GM12878 (cell line): ENCODE measurements at regions of chr5 and their contacts with region 1.

Region 1: DNA sequence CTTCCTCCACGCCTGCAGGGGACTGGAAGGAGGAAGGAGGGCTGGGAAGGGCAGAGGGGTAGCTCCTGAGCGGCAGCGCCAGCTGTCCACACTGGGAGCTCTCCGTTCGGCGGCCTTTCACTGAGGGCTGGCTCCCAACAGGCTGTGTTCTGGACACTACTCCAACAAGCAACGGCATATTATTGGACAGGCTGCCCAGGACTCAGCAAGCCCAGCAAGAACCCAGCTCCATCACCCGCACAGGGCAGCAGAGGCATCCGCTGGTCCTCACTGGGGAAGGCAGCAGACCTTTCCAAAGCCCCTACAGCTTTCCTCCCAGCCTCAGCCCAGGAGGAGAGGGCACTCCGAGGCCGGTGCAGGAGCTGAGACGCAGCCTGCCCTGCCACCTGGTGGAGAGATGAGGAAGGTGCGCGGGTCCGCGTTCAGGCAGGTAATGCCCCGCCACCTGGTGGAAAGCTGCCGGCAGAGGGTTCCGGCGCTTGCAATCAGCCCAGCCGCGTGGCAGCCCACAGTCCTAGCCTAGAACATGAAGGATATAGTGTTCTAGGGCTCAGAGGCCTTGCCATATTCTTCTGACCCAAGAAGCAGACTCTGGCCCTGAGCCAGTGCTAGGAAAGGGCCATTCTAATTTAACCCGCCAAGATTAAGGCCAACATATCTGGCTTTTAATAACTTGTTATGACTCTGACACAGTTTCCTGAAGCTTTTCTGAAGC is 74.4 kb downstream of the NRG2 start:
- DNase-seq: peak; percentile 43
- ATAC-seq: peak; percentile 97
- H3K4me3 ChIP-seq: no peak overlapping the region
- H3K27ac ChIP-seq: no peak overlapping the region
- H3K4me1 ChIP-seq: peaks cover 10% of the 10 kb centered on the region
- H3K27me3 ChIP-seq: no peaks in the 10 kb centered on the region
- CTCF ChIP-seq: peak; percentile 100; a peak in 5 of 6 replicates
- EP300 ChIP-seq: no peak
- POLR2A ChIP-seq: no peak
- RAD21 ChIP-seq: peak; percentile 97

Region 2: GRCh38 chr5:139293504-139294373 is 675.0 kb before region 1 on chr5 and contains the start of gene MATR3:
- CTCF ChIA-PET with region 1: no interaction called
- POLR2A ChIA-PET with region 1: no interaction called
- RAD21 ChIA-PET with region 1: no interaction called
- SMC1A ChIA-PET with region 1: no interaction called
- in situ Hi-C with region 1: no loop called
- intact Hi-C with region 1: no loop called
- DNase-seq: peak; percentile 74
- ATAC-seq: peak; percentile 84
- H3K4me3 ChIP-seq: peak within 1 kb of the TSS; percentile 89
- H3K27ac ChIP-seq: peak within 1 kb of the TSS; percentile 98
- H3K4me1 ChIP-seq: peaks cover 11% of the 10 kb centered on the region
- H3K27me3 ChIP-seq: no peaks in the 10 kb centered on the region
- CTCF ChIP-seq: no peak
- EP300 ChIP-seq: peak in 1 of 2 experiments; percentile 48; a peak in 1 of 4 replicates
- POLR2A ChIP-seq: peak; percentile 98
- RAD21 ChIP-seq: no peak
- polyA plus RNA-seq, gene MATR3: 149 to 187 TPM

Region 3: DNA sequence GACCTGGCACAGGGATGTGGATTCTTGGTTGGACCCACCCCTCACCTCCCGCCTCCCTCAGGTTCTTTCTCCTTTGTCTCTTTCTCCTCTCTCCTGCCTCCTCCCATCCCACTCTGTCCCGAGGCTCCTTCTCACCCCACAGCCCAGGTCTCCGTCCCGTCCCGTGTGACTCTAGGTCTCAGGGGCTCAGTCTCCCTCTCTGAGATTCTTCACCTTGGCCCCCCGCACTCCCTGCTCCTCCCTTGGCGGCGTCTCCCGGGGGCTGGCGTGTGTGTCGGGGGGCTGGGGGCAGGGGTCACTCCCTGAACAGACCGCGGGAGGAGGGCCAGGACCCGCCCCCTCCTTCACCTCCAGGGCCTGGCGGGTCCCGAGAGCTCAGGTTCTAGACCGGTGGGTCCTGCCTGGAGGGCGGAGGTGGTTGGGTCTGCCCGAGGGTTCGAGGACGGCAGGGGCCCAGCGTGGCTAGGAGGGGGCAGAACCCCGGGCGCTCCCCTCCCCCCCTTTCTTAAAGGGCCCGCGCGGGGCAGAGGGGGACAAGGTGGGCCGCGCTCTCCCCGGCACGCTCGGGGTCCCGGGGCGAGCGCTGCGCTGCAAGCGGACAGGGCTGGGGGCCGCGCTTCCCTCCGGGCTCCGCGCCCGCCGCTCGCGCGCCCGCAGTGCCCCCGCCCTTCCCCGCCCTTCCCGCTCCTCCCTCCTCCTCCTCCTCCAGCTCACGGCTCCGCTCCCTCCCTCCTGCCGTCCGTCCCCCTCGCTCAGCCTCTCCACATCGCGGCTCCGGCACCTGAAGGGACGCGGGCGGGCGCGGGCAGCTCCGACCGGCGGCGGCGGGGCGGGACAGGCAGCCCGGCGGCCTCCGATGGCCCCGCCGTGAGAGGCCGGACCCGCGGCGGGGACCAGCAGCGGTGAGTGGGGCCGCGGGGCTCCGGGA is 173.4 kb before region 1 on chr5 and contains the start of gene PSD2:
- CTCF ChIA-PET with region 1: interaction called, 298 read pairs
- POLR2A ChIA-PET with region 1: no interaction called
- RAD21 ChIA-PET with region 1: interaction called, 131 read pairs
- SMC1A ChIA-PET with region 1: interaction called, 6 read pairs
- in situ Hi-C with region 1: no loop called
- intact Hi-C with region 1: no loop called
- DNase-seq: no peak
- ATAC-seq: no peak
- H3K4me3 ChIP-seq: no peak within 1 kb of the TSS
- H3K27ac ChIP-seq: no peak within 1 kb of the TSS
- H3K4me1 ChIP-seq: no peaks in the 10 kb centered on the region
- H3K27me3 ChIP-seq: peaks cover 18 to 19% of the 10 kb centered on the region in 2 experiments
- CTCF ChIP-seq: no peak
- EP300 ChIP-seq: no peak
- POLR2A ChIP-seq: no peak
- RAD21 ChIP-seq: no peak
- polyA plus RNA-seq, gene PSD2: 0.02 TPM in 1 of 2 experiments, not detected in the other

Region 4: GRCh38 chr5:139872052-139872766 is 96.5 kb before region 1 on chr5:
- CTCF ChIA-PET with region 1: interaction called, 129 read pairs
- POLR2A ChIA-PET with region 1: interaction called, 4 read pairs
- RAD21 ChIA-PET with region 1: interaction called, 17 read pairs
- SMC1A ChIA-PET with region 1: interaction called, 16 read pairs
- in situ Hi-C with region 1: no loop called
- intact Hi-C with region 1: no loop called
- DNase-seq: no peak
- ATAC-seq: peak; percentile 28; the same call in 1 of the 3 replicates
- H3K4me3 ChIP-seq: no peak overlapping the region
- H3K27ac ChIP-seq: no peak overlapping the region
- H3K4me1 ChIP-seq: no peaks in the 10 kb centered on the region
- H3K27me3 ChIP-seq: no peaks in the 10 kb centered on the region
- CTCF ChIP-seq: peak; percentile 20 to 27 (median 21); a peak in 3 of 6 replicates
- EP300 ChIP-seq: no peak
- POLR2A ChIP-seq: no peak
- RAD21 ChIP-seq: peak; percentile 30

Region 5: GRCh38 chr5:139930406-139930805 is 38.3 kb before region 1 on chr5:
- CTCF ChIA-PET with region 1: interaction called, 11 read pairs
- POLR2A ChIA-PET with region 1: no interaction called
- RAD21 ChIA-PET with region 1: interaction called, 3 read pairs
- SMC1A ChIA-PET with region 1: interaction called, 3 read pairs
- in situ Hi-C with region 1: no loop called
- intact Hi-C with region 1: no loop called
- DNase-seq: no peak
- ATAC-seq: no peak
- H3K4me3 ChIP-seq: no peak overlapping the region
- H3K27ac ChIP-seq: no peak overlapping the region
- H3K4me1 ChIP-seq: 0 out of 2 replicates have a peak, but pooled peaks cover 6% of the 10 kb centered on the region
- H3K27me3 ChIP-seq: no peaks in the 10 kb centered on the region
- CTCF ChIP-seq: no peak
- EP300 ChIP-seq: no peak
- POLR2A ChIP-seq: no peak
- RAD21 ChIP-seq: no peak

Region 6: DNA sequence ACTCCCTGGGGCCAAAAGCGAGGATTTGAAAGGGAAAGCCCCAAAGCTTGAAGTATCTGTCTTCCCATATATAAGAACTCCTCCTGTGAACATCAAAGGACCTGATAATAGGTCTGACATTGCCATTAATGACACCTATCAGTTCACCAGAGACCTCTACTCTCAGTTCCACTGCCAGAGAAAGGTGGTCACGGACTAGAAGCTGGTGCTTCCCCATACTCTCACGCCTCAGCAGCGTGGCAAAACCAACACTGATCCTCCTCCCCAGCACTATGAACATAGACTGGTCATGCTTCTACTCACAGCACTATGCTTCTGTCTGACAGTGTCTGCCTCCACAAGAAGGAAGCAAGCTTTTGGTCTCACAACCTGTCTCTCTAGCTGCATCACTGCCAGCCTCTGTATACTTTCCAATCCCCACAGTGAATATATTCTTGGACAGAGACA is 36.5 kb after region 1 on chr5:
- CTCF ChIA-PET with region 1: interaction called, 88 read pairs
- POLR2A ChIA-PET with region 1: interaction called, 3 read pairs
- RAD21 ChIA-PET with region 1: interaction called, 19 read pairs
- SMC1A ChIA-PET with region 1: interaction called, 30 read pairs
- in situ Hi-C with region 1: no loop called
- intact Hi-C with region 1: no loop called
- DNase-seq: peak; percentile 96
- ATAC-seq: peak; percentile 98
- H3K4me3 ChIP-seq: no peak overlapping the region
- H3K27ac ChIP-seq: peak overlapping the region; percentile 49
- H3K4me1 ChIP-seq: peaks cover 26% of the 10 kb centered on the region
- H3K27me3 ChIP-seq: no peaks in the 10 kb centered on the region
- CTCF ChIP-seq: no peak
- EP300 ChIP-seq: peak; percentile 35 to 64; a peak in 2 of 4 replicates
- POLR2A ChIP-seq: peak; percentile 66
- RAD21 ChIP-seq: no peak

Region 7: DNA sequence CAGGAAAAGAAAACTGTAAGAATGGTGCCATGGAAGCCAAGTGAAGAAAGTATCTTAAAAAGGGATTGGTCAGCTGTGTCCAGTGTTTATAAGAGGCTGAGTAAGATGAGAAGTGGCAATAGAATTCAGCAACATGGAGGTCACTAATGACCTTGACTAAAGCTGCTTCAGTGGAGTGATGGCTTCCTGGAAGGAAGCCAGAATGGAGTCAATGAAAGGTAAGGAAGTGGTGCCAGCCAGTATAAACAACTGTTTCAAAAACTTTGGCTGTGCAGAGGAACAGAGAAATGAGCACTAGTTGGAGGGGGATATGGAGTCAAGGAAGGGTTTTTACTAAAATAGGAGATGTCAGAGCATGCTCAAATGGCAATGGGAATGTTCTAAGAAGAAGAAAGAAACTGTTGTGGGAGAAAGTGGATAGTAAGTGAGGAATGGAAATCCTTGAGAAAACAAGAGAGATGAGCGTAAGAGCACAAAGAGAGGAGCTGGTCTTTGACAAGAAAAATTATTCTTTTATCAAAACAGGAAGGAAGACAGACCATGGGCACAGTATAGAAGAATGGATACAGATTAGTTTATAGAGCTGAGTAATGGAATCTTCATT is 85.5 kb after region 1 on chr5:
- CTCF ChIA-PET with region 1: interaction called, 17 read pairs
- POLR2A ChIA-PET with region 1: no interaction called
- RAD21 ChIA-PET with region 1: interaction called, 7 read pairs
- SMC1A ChIA-PET with region 1: interaction called, 15 read pairs
- in situ Hi-C with region 1: no loop called
- intact Hi-C with region 1: no loop called
- DNase-seq: no peak
- ATAC-seq: no peak
- H3K4me3 ChIP-seq: no peak overlapping the region
- H3K27ac ChIP-seq: no peak overlapping the region
- H3K4me1 ChIP-seq: peaks cover 7% of the 10 kb centered on the region
- H3K27me3 ChIP-seq: no peaks in the 10 kb centered on the region
- CTCF ChIP-seq: no peak
- EP300 ChIP-seq: no peak
- POLR2A ChIP-seq: no peak
- RAD21 ChIP-seq: no peak